Prostate gland (tissue), 2 donors: ENCODE measurements at regions of chr7 and their contacts with region 1.

Region 1: GRCh38 chr7:31122649-31123058 is 70.5 kb downstream of the ADCYAP1R1 start:
- DNase-seq: peak; percentile 43
- H3K4me3 ChIP-seq: no peak overlapping the region
- H3K27ac ChIP-seq: no peak overlapping the region
- H3K4me1 ChIP-seq: no peaks in the 10 kb centered on the region
- H3K27me3 ChIP-seq: no peaks in the 10 kb centered on the region
- CTCF ChIP-seq: peak; percentile 34 to 78 (median 70)
- POLR2A ChIP-seq: no peak

Region 2: GRCh38 chr7:30771174-30771879 is 351.3 kb before region 1 on chr7 and contains the start of gene MINDY4:
- intact Hi-C with region 1: no loop called
- DNase-seq: peak; percentile 62
- H3K4me3 ChIP-seq: peak within 1 kb of the TSS; percentile 68 to 78
- H3K27ac ChIP-seq: peak within 1 kb of the TSS; percentile 66 to 83
- H3K4me1 ChIP-seq: no peaks in the 10 kb centered on the region
- H3K27me3 ChIP-seq: no peaks in the 10 kb centered on the region
- CTCF ChIP-seq: no peak
- POLR2A ChIP-seq: no peak
- total RNA-seq, gene MINDY4: 8.1 to 31.9 TPM

Region 3: GRCh38 chr7:30800785-30801252 is 321.8 kb before region 1 on chr7:
- intact Hi-C with region 1: loop called (anchors 5 kb)
- DNase-seq: peak; percentile 65
- H3K4me3 ChIP-seq: no peak overlapping the region
- H3K27ac ChIP-seq: no peak overlapping the region
- H3K4me1 ChIP-seq: no peaks in the 10 kb centered on the region
- H3K27me3 ChIP-seq: no peaks in the 10 kb centered on the region
- CTCF ChIP-seq: peak; percentile 28 to 79 (median 60)
- POLR2A ChIP-seq: no peak

Region 4: GRCh38 chr7:30983042-30983913 is 139.4 kb before region 1 on chr7:
- intact Hi-C with region 1: loop called (anchors 2 kb)
- DNase-seq: peak; percentile 73
- H3K4me3 ChIP-seq: no peak overlapping the region
- H3K27ac ChIP-seq: no peak overlapping the region
- H3K4me1 ChIP-seq: peaks cover 3% of the 10 kb centered on the region
- H3K27me3 ChIP-seq: no peaks in the 10 kb centered on the region
- CTCF ChIP-seq: peak; percentile 80 to 91 (median 88)
- POLR2A ChIP-seq: no peak

Region 5: GRCh38 chr7:31735991-31736982 is 613.6 kb after region 1 on chr7:
- intact Hi-C with region 1: loop called (anchors 10 kb)
- DNase-seq: peak; percentile 50
- H3K4me3 ChIP-seq: no peak overlapping the region
- H3K27ac ChIP-seq: no peak overlapping the region
- H3K4me1 ChIP-seq: no peaks in the 10 kb centered on the region
- H3K27me3 ChIP-seq: no peaks in the 10 kb centered on the region
- CTCF ChIP-seq: peak; percentile 61 to 84 (median 76)
- POLR2A ChIP-seq: no peak